CD8-positive, alpha-beta memory T cell (primary cell): ENCODE measurements at regions of chr7 and their contacts with region 1.

Region 1: DNA sequence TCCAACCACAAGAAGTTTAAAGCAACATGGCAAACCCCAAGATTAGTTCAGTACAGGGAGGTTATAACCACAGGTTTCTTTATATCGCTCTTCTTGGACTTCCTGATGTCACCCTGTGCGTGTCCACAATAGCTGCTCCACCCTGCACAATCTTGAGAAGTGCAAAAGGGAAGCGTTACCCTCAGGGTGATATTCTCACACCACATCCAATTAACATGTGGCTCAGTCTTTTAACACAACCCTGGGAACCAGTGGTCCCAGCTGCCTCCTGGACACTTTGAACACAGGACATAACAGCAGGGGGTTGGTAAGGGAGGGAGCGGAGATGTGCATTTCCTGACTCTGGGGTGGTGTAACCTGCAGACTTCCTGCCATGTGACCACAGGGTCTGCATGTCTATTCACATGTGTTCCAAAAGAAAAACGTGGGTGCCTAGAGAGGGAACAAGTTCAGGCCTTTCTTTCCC is 64.6 kb downstream of the GSAP start:
- DNase-seq: peak; percentile 26 to 85 (median 71)
- H3K4me3 ChIP-seq: peak overlapping the region; percentile 23
- H3K4me3 Mint-ChIP-seq: peak overlapping the region; percentile 40 to 81 (median 74)
- H3K27ac ChIP-seq: peak overlapping the region; percentile 18
- H3K27ac Mint-ChIP-seq: peak overlapping the region; percentile 72 to 95 (median 84)
- H3K4me1 ChIP-seq: peaks cover 76% of the 10 kb centered on the region
- H3K4me1 Mint-ChIP-seq: peaks cover 70 to 79% (median 74%) of the 10 kb centered on the region in 3 donors
- H3K27me3 ChIP-seq: no peaks in the 10 kb centered on the region
- H3K27me3 Mint-ChIP-seq: no peaks in the 10 kb centered on the region

Region 2: DNA sequence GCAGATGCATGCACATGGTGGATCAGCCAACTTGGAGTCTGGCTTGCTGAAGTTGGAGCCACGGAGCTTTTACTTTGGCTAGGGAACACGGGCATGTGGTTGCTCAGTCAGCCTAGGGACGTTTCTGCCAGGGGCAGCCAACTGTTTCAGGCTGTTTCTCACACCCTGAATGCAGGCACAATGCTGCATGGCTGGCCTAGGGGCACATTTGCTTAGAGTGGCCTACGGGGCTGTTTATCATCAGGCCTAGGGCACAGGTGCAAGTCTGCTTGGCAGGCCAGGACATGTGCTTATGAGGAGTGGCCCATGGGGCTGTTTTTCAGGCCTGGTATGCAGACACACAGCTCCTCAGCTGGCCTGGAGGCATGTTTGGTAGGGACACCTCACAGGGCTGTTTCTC is 42.8 kb before region 1 on chr7:
- CTCF ChIA-PET with region 1: no interaction called
- POLR2A ChIA-PET with region 1: no interaction called
- DNase-seq: no peak
- H3K4me3 ChIP-seq: no peak overlapping the region
- H3K4me3 Mint-ChIP-seq: no peak overlapping the region
- H3K27ac ChIP-seq: no peak overlapping the region
- H3K27ac Mint-ChIP-seq: no peak overlapping the region
- H3K4me1 ChIP-seq: no peaks in the 10 kb centered on the region
- H3K4me1 Mint-ChIP-seq: peaks cover 0 to 9% (median 0%) of the 10 kb centered on the region in 3 donors
- H3K27me3 ChIP-seq: no peaks in the 10 kb centered on the region
- H3K27me3 Mint-ChIP-seq: no peaks in the 10 kb centered on the region

Region 3: DNA sequence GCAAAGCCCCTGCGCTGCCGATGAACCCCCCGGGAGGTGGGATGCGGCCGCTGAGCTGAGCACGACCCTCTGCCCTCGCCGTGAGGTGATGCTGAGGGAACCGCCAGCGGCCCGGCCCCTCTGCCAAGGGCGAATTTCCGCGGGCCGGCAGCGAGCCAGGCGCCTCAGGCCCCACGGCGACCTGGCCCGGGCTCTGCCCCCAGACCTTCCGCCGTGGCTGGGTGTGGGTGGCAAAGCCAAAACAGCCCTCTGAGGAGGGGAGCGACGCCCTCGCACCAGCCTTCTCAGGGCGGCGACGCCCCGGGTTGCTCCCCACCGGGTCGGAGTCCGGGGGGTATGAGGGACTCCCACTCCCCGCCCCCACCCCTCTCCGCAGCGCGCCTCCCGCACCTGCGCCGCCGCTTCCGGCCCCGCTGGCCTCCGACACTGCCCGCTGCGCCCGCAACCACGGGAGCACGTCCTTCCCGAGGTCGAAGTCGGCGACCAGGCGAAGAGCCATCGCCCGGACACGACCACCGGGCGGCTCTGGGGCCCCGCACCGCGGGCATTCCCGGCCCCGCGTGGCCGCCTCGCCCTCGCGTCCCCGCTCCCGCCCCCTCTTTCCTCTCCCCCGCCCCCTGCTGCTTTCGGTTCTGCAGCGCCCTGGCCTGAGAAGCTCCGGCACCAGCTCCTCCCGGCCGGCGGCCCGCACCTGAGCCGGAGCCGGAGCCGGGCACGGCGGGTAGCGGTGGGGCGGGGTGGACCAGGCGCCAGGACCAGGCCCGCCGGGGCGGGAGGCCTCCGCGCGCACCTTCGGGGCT is 64.5 kb after region 1 on chr7 and contains the start of gene GSAP:
- CTCF ChIA-PET with region 1: interaction called, 4 read pairs
- POLR2A ChIA-PET with region 1: interaction called, 10 read pairs
- DNase-seq: peak; percentile 34 to 71 (median 50)
- H3K4me3 ChIP-seq: peak within 1 kb of the TSS; percentile 72
- H3K4me3 Mint-ChIP-seq: peak within 1 kb of the TSS; percentile 76 to 95 (median 83)
- H3K27ac ChIP-seq: peak within 1 kb of the TSS; percentile 53
- H3K27ac Mint-ChIP-seq: peak within 1 kb of the TSS; percentile 29 to 86 (median 69)
- H3K4me1 ChIP-seq: peaks cover 28% of the 10 kb centered on the region
- H3K4me1 Mint-ChIP-seq: peaks cover 32 to 59% (median 42%) of the 10 kb centered on the region in 3 donors
- H3K27me3 ChIP-seq: no peaks in the 10 kb centered on the region
- H3K27me3 Mint-ChIP-seq: peaks cover 0 to 1% of the 10 kb centered on the region in 2 donors
- total RNA-seq, gene GSAP: 2.0 to 2.9 TPM